GM12878 (cell line): ENCODE measurements at regions of chr4 and their contacts with region 1.

Region 1: GRCh38 chr4:102826890-102827673 is at the start of gene UBE2D3:
- DNase-seq: peak; percentile 45
- ATAC-seq: peak; percentile 58
- H3K4me3 ChIP-seq: peak within 1 kb of the TSS; percentile 89
- H3K27ac ChIP-seq: peak within 1 kb of the TSS; percentile 99
- H3K4me1 ChIP-seq: peaks cover 4% of the 10 kb centered on the region; the same call in 1 of the 2 replicates
- H3K27me3 ChIP-seq: no peaks in the 10 kb centered on the region
- CTCF ChIP-seq: peak; percentile 7 to 27 (median 15); a peak in 3 of 6 replicates
- EP300 ChIP-seq: peak; percentile 33 to 41; a peak in 2 of 4 replicates
- POLR2A ChIP-seq: peak; percentile 93
- RAD21 ChIP-seq: 0 out of 2 replicates have a peak, but pooled peaks have one; percentile 7
- polyA plus RNA-seq, gene UBE2D3: 162 to 186 TPM

Region 2: GRCh38 chr4:102500696-102501446 is 326.2 kb before region 1 on chr4 and contains the start of gene NFKB1:
- CTCF ChIA-PET with region 1: no interaction called
- POLR2A ChIA-PET with region 1: interaction called, 4 read pairs
- RAD21 ChIA-PET with region 1: interaction called, 4 read pairs
- SMC1A ChIA-PET with region 1: no interaction called
- in situ Hi-C with region 1: no loop called
- intact Hi-C with region 1: loop called (anchors 2 kb)
- DNase-seq: peak; percentile 55
- ATAC-seq: peak; percentile 48
- H3K4me3 ChIP-seq: peak within 1 kb of the TSS; percentile 75
- H3K27ac ChIP-seq: peak within 1 kb of the TSS; percentile 97
- H3K4me1 ChIP-seq: peaks cover 3% of the 10 kb centered on the region; the same call in 1 of the 2 replicates
- H3K27me3 ChIP-seq: no peaks in the 10 kb centered on the region
- CTCF ChIP-seq: no peak
- EP300 ChIP-seq: peak in 1 of 2 experiments; percentile 65; a peak in 1 of 4 replicates
- POLR2A ChIP-seq: peak; percentile 83; the same call in 1 of the 2 replicates
- RAD21 ChIP-seq: no peak
- polyA plus RNA-seq, gene NFKB1: 20.8 to 32.7 TPM

Region 3: GRCh38 chr4:102687373-102687981 is 139.6 kb before region 1 on chr4:
- CTCF ChIA-PET with region 1: interaction called, 5 read pairs
- POLR2A ChIA-PET with region 1: interaction called, 8 read pairs
- RAD21 ChIA-PET with region 1: interaction called, 14 read pairs
- SMC1A ChIA-PET with region 1: interaction called, 9 read pairs
- in situ Hi-C with region 1: no loop called
- intact Hi-C with region 1: loop called (anchors 2 kb)
- DNase-seq: peak; percentile 93
- ATAC-seq: peak; percentile 91
- H3K4me3 ChIP-seq: peak overlapping the region; percentile 54; the same call in 1 of the 2 replicates
- H3K27ac ChIP-seq: peak overlapping the region; percentile 90
- H3K4me1 ChIP-seq: peaks cover 36% of the 10 kb centered on the region
- H3K27me3 ChIP-seq: no peaks in the 10 kb centered on the region
- CTCF ChIP-seq: no peak
- EP300 ChIP-seq: peak in 1 of 2 experiments; percentile 69; a peak in 2 of 4 replicates
- POLR2A ChIP-seq: no peak
- RAD21 ChIP-seq: no peak

Region 4: GRCh38 chr4:102809190-102809589 is 17.9 kb before region 1 on chr4:
- CTCF ChIA-PET with region 1: interaction called, 37 read pairs
- POLR2A ChIA-PET with region 1: interaction called, 121 read pairs
- RAD21 ChIA-PET with region 1: interaction called, 22 read pairs
- SMC1A ChIA-PET with region 1: interaction called, 72 read pairs
- in situ Hi-C with region 1: no loop called
- intact Hi-C with region 1: no loop called
- DNase-seq: no peak
- ATAC-seq: peak; percentile 80
- H3K4me3 ChIP-seq: no peak overlapping the region
- H3K27ac ChIP-seq: no peak overlapping the region
- H3K4me1 ChIP-seq: peaks cover 18% of the 10 kb centered on the region
- H3K27me3 ChIP-seq: no peaks in the 10 kb centered on the region
- CTCF ChIP-seq: no peak
- EP300 ChIP-seq: no peak
- POLR2A ChIP-seq: no peak
- RAD21 ChIP-seq: no peak

Region 5: GRCh38 chr4:102868781-102869568 is 41.9 kb after region 1 on chr4 and contains the start of gene CISD2:
- CTCF ChIA-PET with region 1: interaction called, 30 read pairs
- POLR2A ChIA-PET with region 1: interaction called, 164 read pairs
- RAD21 ChIA-PET with region 1: interaction called, 139 read pairs
- SMC1A ChIA-PET with region 1: interaction called, 91 read pairs
- in situ Hi-C with region 1: no loop called
- intact Hi-C with region 1: loop called (anchors 1 kb)
- DNase-seq: peak; percentile 80
- ATAC-seq: peak; percentile 87
- H3K4me3 ChIP-seq: peak within 1 kb of the TSS; percentile 86
- H3K27ac ChIP-seq: peak within 1 kb of the TSS; percentile 98
- H3K4me1 ChIP-seq: peaks cover 5% of the 10 kb centered on the region; the same call in 1 of the 2 replicates
- H3K27me3 ChIP-seq: no peaks in the 10 kb centered on the region
- CTCF ChIP-seq: no peak
- EP300 ChIP-seq: 0 out of 4 replicates have a peak, but pooled peaks of 1 of the 2 experiments have one; percentile 18
- POLR2A ChIP-seq: peak; percentile 94
- RAD21 ChIP-seq: no peak
- polyA plus RNA-seq, gene CISD2: 52.3 to 55.9 TPM

Region 6: DNA sequence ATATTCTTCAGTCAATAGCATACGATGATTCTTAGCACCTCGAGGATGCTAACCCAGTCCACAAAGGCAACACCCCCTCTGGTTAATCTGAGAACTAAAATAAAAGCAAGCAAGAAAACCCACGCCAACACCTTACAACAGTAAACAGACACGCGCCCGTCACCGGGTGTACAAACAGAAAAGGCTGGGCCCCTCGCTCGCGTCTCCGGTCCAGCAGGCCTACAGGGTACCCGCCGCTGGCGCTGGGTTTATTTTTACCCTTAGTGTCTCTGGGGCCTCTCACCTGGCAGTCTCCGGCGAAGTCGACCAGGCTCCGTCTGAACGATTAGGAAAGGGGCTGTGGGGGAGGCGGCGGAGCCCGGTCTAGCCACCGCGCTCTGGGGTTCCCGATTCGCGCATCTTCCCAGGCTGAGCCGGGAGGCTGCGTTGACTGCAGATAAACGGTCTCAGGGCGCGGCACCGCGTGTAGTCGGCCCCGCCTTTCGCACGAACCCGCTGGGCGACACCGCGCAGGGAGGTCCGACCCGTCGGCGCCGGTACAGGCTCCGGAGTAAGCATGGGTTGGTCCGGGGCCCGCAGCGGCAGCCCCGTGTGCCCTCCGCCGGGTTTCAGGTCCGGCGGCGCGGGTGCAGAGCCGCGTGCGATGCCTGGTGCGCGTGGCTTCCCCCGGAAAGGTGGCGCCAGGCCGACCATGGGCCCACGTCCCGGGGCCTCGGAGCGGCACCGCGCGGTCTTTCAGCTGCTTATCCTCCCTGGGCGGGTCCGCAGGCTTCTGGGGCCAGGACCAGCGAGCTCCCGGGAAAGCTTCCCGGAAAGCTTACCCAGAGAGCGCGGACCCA is 249.0 kb after region 1 on chr4:
- CTCF ChIA-PET with region 1: no interaction called
- POLR2A ChIA-PET with region 1: interaction called, 5 read pairs
- RAD21 ChIA-PET with region 1: interaction called, 7 read pairs
- SMC1A ChIA-PET with region 1: interaction called, 4 read pairs
- in situ Hi-C with region 1: no loop called
- intact Hi-C with region 1: loop called (anchors 2 kb)
- DNase-seq: no peak
- ATAC-seq: peak; percentile 75
- H3K4me3 ChIP-seq: peak overlapping the region; percentile 77
- H3K27ac ChIP-seq: peak overlapping the region; percentile 93
- H3K4me1 ChIP-seq: peaks cover 8% of the 10 kb centered on the region
- H3K27me3 ChIP-seq: no peaks in the 10 kb centered on the region
- CTCF ChIP-seq: 0 out of 6 replicates have a peak, but pooled peaks of 1 of the 3 experiments have one; percentile 11
- EP300 ChIP-seq: no peak
- POLR2A ChIP-seq: peak; percentile 89
- RAD21 ChIP-seq: no peak

Region 7: GRCh38 chr4:104490770-104491480 is 1663.8 kb after region 1 on chr4:
- CTCF ChIA-PET with region 1: no interaction called
- POLR2A ChIA-PET with region 1: no interaction called
- RAD21 ChIA-PET with region 1: no interaction called
- SMC1A ChIA-PET with region 1: no interaction called
- in situ Hi-C with region 1: no loop called
- intact Hi-C with region 1: loop called (anchors 5 kb)
- DNase-seq: no peak
- ATAC-seq: peak; percentile 7
- H3K4me3 ChIP-seq: peak overlapping the region; percentile 78
- H3K27ac ChIP-seq: peak overlapping the region; percentile 97
- H3K4me1 ChIP-seq: peaks cover 16% of the 10 kb centered on the region
- H3K27me3 ChIP-seq: no peaks in the 10 kb centered on the region
- CTCF ChIP-seq: no peak
- EP300 ChIP-seq: no peak
- POLR2A ChIP-seq: peak; percentile 63
- RAD21 ChIP-seq: no peak